ENCODE measurements at regions of chr7 and their contacts with region 1.

Region 1: GRCh38 chr7:92809397-92810241 is 26.8 kb downstream of the CDK6 start:
- DNase-seq: peak; percentile 78
- H3K4me3 Mint-ChIP-seq: no peak overlapping the region
- H3K27ac Mint-ChIP-seq: peak overlapping the region; percentile 54
- H3K4me1 Mint-ChIP-seq: peaks cover 72% of the 10 kb centered on the region
- H3K27me3 Mint-ChIP-seq: no peaks in the 10 kb centered on the region

Region 2: DNA sequence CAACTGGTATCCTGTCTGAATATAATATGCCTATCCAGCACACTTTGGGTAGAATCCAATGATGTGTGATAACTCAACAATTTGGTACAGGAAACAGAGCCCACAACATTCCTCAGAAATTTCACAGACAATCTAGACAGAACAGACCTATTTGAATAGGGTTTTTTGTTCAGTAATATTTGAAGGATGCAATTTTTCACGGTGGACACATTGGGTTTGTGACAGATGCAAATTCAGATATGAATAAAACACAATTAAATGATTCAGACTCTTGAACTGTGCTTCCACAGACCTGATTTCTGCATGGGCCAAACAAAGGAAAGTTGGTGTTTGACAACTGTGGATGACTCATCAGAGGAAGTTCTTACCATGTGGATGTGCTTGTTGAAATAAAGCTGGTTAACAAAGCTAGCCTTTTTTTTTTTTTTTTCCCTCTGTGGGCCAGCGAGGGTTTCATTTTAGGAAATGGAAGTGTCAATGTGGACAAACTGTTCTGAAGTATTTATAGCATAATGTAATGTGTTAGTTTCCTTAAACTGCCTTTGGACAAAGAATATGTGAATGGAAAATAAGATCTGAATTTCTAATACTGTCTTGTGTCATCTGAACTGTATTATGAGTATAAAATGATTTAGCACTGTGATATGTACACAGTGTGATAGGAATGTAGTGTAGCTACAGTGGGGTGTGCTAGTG is 176.3 kb before region 1 on chr7:
- CTCF ChIA-PET with region 1: no interaction called
- intact Hi-C with region 1: loop called (anchors 1 kb)
- DNase-seq: peak; percentile 49
- H3K4me3 Mint-ChIP-seq: no peak overlapping the region
- H3K27ac Mint-ChIP-seq: peak overlapping the region; percentile 92
- H3K4me1 Mint-ChIP-seq: peaks cover 84% of the 10 kb centered on the region
- H3K27me3 Mint-ChIP-seq: no peaks in the 10 kb centered on the region

Region 3: GRCh38 chr7:92691578-92691977 is 118.0 kb before region 1 on chr7:
- CTCF ChIA-PET with region 1: no interaction called
- intact Hi-C with region 1: loop called (anchors 1 kb)
- DNase-seq: peak; percentile 46
- H3K4me3 Mint-ChIP-seq: no peak overlapping the region
- H3K27ac Mint-ChIP-seq: peak overlapping the region; percentile 87
- H3K4me1 Mint-ChIP-seq: peaks cover 70% of the 10 kb centered on the region
- H3K27me3 Mint-ChIP-seq: no peaks in the 10 kb centered on the region

Region 4: DNA sequence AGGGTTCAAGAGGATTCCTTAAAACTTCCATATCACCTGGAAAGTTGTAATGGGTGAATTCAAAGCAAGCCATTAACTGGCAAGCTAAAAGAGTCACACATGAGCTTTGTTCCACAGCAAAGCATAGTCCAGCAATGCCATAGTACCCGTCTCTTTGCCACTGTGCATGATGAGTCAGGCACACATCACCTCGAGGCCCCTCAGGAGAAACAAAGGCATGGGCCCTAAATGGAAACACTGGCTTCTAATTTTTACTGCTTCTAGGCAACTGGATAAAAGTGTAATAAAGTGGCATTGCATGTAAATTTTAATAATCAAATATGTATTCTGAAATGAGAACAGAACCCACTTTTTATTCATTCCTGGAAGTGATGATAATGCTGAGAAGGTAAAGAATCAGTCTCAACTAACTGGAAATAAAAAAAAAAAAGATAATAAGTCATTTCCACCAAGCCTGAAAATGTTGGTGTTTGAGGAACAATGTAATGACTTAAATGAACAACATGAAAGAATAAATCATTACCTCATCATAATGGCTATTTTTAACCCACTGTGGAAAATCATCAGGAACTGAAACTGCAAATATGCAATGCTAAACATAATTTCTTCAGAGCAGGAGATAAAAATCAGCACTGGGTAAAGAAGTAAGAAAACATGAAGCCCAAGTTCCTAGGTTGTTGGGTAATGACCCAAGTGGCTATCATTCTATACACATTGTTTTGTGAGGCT is 78.1 kb before region 1 on chr7:
- CTCF ChIA-PET with region 1: no interaction called
- intact Hi-C with region 1: loop called (anchors 1 kb)
- DNase-seq: peak; percentile 66
- H3K4me3 Mint-ChIP-seq: peak overlapping the region; percentile 9
- H3K27ac Mint-ChIP-seq: peak overlapping the region; percentile 95
- H3K4me1 Mint-ChIP-seq: peaks cover 64% of the 10 kb centered on the region
- H3K27me3 Mint-ChIP-seq: no peaks in the 10 kb centered on the region

Region 5: GRCh38 chr7:92824901-92825480 is 15.4 kb after region 1 on chr7:
- CTCF ChIA-PET with region 1: interaction called, 5 read pairs
- intact Hi-C with region 1: loop called (anchors 1 kb)
- DNase-seq: no peak
- H3K4me3 Mint-ChIP-seq: no peak overlapping the region
- H3K27ac Mint-ChIP-seq: no peak overlapping the region
- H3K4me1 Mint-ChIP-seq: peaks cover 73% of the 10 kb centered on the region
- H3K27me3 Mint-ChIP-seq: no peaks in the 10 kb centered on the region

Region 6: GRCh38 chr7:93117852-93118530 is 308.4 kb after region 1 on chr7 and contains the start of gene SAMD9:
- CTCF ChIA-PET with region 1: no interaction called
- intact Hi-C with region 1: loop called (anchors 5 kb)
- DNase-seq: peak; percentile 70
- H3K4me3 Mint-ChIP-seq: peak within 1 kb of the TSS; percentile 71
- H3K27ac Mint-ChIP-seq: peak within 1 kb of the TSS; percentile 65
- H3K4me1 Mint-ChIP-seq: peaks cover 47% of the 10 kb centered on the region
- H3K27me3 Mint-ChIP-seq: no peaks in the 10 kb centered on the region
- total RNA-seq, gene SAMD9: 2.9 to 3.1 TPM

Region 7: DNA sequence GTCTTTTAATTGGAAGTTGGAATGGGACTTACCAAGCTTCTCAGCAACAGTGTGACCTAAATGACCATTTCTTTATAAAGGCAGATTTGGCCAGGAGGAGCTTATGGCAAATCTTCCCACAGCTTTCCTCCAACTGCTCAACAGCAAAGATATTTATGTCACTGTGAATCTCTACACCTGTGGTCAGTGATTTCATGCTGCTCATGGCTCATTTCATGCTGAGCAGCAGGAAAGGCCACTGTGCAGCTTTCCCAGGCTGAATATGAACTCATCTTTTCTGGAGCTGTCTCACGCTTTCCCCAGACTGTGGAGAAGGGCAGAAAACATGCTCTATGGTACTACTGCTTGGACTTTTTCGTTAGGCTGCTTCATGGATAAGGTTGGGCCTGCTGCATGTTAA is 735.1 kb after region 1 on chr7:
- CTCF ChIA-PET with region 1: no interaction called
- intact Hi-C with region 1: no loop called
- DNase-seq: no peak
- H3K4me3 Mint-ChIP-seq: no peak overlapping the region
- H3K27ac Mint-ChIP-seq: no peak overlapping the region
- H3K4me1 Mint-ChIP-seq: no peaks in the 10 kb centered on the region
- H3K27me3 Mint-ChIP-seq: no peaks in the 10 kb centered on the region

Measured in activated naive CD4-positive, alpha-beta T cell treated with anti-CD3 and anti-CD28 coated beads for 36 hours (primary cell).